Lower leg skin (tissue), 4 donors: ENCODE measurements at regions of chr7 and their contacts with region 1.

Region 1: GRCh38 chr7:89757910-89758309 is 396.4 kb upstream of the STEAP1 start:
- DNase-seq: no peak
- H3K4me3 ChIP-seq: no peak overlapping the region
- CTCF ChIP-seq: no peak
- POLR2A ChIP-seq: no peak

Region 2: DNA sequence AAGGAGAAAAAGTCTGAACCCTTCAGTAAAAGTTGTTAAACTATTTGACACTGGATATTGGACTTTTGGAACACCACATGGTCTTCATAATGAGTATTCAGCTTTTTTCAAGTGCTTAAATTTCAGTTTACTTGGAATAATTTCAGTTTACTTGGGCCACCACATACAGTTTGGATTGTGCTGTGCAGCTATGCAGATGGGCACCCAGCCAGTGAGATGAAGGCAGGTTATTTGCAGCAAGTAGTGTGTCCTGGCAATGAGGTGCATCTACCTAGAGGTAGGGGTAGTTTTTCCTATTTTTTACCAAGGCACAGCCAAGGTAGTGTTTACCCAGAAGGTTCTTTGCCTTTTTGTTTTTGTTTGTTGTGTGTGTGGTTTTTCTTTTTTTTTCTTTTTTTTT is 1847.8 kb before region 1 on chr7:
- intact Hi-C with region 1: no loop called
- DNase-seq: no peak
- H3K4me3 ChIP-seq: no peak overlapping the region
- CTCF ChIP-seq: no peak
- POLR2A ChIP-seq: no peak

Region 3: DNA sequence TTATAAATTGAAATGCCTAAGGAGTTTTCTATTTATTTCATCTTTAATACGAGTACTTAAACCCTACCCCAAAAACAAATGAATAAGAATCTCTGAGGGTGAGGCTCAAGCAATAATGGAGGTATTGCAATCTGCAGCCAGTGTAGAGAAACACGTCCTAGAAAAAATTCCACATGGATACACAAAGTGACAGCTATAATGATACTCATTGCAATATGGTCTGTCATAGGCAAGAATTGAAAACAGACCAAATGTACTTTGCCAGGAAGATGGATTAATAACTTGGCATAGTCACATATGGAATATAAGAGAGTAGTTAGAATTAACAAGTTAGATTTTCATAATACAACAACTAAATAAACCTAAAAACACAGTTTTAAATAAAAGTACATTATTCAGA is 43.8 kb before region 1 on chr7:
- intact Hi-C with region 1: no loop called
- DNase-seq: no peak
- H3K4me3 ChIP-seq: no peak overlapping the region
- CTCF ChIP-seq: no peak
- POLR2A ChIP-seq: no peak

Region 4: GRCh38 chr7:89813081-89813480 is 55.2 kb after region 1 on chr7:
- intact Hi-C with region 1: loop called (anchors 10 kb)
- DNase-seq: no peak
- H3K4me3 ChIP-seq: no peak overlapping the region
- CTCF ChIP-seq: no peak
- POLR2A ChIP-seq: no peak

Region 5: DNA sequence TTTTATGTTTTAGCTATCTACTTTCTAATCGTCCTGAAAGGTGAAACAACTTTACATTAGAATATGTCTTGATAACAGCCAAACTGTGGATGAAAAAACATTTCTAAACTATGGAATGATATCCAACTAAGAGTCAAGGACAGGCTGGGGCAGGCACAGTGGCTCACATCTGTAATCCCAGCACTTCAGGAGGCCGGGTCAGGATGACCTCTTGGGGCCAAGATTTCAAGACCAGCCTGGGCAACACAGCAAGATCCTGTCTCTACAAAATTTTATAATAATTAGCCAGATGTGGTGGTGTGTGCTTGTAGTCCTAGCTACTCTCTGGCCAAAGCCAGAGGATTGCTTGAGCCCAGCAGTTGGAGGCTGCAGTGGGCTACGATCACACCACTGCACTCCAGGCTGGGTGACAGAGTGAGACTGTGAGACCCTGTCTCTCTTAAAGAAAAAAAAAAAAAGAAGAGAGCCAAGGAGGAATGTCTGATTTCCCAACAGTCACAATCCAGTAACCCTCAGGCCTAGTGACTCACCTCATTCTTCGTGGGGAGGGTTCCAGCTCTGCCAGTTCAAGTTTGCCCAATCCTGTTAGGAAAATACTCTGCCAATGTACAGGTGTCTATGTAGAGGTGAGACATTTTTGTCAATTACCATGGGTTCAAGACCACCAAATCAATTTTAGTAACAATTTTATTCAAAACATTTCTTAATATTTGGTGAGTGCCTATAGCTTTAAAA is 1491.8 kb after region 1 on chr7:
- intact Hi-C with region 1: no loop called
- DNase-seq: peak in 1 of 2 donors; percentile 43
- H3K4me3 ChIP-seq: no peak overlapping the region
- CTCF ChIP-seq: no peak
- POLR2A ChIP-seq: no peak